Head of caudate nucleus (tissue), 42 donors: ENCODE measurements at regions of chr9 and their contacts with region 1.

Region 1: DNA sequence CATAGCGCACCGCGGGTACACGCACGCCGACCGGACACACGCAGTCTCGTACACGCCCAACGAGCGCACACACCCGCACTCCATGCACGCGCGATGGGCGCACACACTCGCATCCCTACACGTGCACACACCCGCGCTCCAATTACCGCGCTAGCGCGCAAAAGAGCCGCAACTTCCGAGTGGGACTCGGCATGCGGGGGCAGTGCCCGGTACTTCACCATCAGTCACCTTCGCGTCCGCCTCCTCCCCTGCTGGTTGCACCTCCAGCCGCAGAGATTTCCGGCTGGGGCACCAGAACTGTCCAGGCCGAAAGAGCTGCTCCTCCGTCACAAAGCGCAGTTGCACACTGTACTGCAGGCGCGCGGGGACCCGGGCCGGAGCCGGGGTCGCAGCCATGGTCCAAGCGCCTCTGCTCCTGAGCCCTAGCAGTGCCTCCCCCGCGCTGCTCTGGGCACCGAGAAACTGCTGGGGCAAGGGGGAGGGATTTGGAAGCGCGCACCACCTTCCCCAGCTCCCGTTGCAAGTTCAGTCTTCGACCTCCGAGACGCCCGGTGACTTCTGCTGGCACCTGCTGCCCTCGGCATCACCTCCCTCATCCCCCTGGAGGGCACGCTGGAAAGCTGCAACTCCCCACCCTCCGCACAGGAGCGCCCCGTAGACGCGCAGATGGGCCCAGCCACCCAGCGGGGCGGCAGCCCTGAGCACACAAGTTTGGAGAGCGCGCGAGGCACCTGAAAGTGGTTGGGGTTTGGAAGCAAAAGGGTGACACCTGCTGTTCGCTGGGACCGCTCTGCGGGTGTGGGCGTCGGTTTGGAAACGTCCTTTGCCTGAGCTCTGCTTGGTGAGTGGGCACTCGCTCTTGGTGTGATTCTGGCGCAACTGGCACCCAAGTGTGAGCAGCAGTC is 337.4 kb upstream of the PUM3 start:
- DNase-seq: peak; percentile 45 to 91 (median 76)

Region 2: DNA sequence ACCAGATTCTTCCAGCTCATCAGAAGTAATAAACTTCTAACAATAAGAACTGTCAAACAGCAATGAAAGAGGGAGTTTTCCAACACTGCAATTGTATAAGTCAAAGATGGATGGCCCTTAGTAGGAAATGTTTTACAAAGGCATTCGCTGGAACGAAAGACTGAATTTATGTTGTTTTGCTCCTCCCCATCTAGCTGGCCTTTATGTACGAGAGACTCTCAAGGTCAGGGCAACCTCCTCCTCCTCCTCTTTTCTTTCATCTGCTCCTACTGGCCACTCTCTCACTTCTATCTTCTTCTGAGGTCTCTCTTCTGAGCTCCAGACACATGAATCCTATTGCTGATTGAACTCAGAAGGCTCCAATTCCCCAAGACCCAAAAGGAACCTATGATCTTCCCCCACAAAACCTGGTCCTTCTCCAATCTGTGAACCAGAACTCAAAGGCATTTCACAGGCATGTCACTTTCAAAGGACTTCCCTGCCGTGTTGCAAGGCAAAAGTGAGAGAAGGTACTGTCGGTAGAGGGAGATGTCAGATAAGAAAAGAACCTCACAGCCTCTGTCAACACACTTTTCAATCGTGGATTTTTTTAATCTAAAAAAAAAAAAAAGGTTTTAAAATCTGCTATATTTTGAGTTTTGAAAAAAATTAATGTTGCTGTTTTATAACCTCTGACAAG is 308.9 kb before region 1 on chr9:
- intact Hi-C with region 1: loop called (anchors 10 kb)
- DNase-seq: peak in 18 of 42 donors; percentile 6 to 70 (median 35)

Region 3: GRCh38 chr9:3191715-3192114 is 10.4 kb after region 1 on chr9:
- intact Hi-C with region 1: no loop called
- DNase-seq: peak in 7 of 42 donors; percentile 6 to 62 (median 20)

Region 4: DNA sequence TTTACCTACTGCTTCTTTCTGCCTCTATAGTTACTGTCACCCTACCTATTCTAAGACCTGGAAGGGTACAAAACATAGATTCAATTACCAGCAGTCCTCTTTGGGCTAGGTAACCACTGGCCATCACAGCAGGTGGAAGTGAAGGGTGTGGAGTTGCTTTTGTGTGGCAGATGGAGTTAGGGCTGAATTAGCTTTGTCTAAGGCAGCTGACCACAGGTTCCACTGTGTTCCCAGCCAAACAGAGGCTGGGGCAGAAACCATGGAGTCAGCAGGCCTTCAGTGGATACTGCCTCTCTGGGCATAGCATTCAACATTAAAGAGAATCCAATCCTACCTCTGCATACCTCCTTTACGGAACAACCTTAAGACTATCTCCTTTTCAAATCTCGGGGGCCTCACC is 90.3 kb after region 1 on chr9:
- intact Hi-C with region 1: no loop called
- DNase-seq: no peak

Region 5: GRCh38 chr9:3455717-3456116 is 274.4 kb after region 1 on chr9:
- intact Hi-C with region 1: no loop called
- DNase-seq: no peak